PC-3 (cell line): ENCODE measurements at regions of chr12 and their contacts with region 1.

Region 1: DNA sequence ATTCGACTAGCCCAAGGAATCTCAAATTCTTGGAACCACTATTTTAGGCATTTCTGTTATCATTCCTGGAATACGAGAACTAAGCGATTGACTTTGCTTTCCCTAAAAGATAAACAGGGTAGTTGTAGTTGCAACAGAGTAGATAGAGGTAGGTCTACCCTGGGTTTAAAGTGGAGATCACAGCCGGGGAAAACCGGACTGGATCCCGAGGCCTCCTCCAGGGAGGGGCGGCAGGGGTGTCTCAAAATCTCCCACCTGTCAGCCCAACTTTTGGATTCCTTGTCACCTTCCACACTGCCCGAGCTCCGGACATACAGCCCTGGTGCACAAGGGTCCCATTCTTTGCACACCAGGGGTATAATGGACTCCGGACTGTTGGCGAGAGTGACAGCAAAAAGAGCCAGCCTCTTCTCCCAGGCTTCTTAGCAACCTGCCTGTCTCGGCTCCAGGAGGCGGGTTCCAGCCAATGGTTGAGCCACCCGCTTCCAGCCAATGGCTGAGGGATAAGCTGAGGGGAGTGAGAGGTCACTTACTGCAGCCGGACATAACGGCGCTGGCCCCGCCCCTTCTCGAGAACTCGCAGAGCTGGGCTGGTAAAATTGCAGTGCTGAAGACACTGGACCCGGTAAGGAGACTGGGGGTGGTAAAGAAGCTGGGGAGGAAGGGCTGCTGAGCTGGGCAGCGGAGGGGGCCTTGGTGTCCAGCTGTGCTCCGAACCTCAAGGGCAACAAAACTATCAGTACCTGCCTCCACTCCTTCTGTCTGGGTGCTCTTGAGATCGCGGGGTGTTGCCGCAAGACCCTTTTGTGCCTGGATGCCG is at the start of gene SUOX:
- DNase-seq: peak; percentile 98
- ATAC-seq: peak; percentile 99
- H3K4me3 ChIP-seq: peak within 1 kb of the TSS; percentile 82
- H3K27ac ChIP-seq: 0 out of 2 replicates have a peak within 1 kb of the TSS, but pooled peaks have one; percentile 5
- H3K4me1 ChIP-seq: peaks cover 5% of the 10 kb centered on the region; the same call in 1 of the 2 replicates
- H3K27me3 ChIP-seq: no peaks in the 10 kb centered on the region
- CTCF ChIP-seq: no peak
- total RNA-seq, gene SUOX: 18.0 and 33.9 TPM in 2 replicates

Region 2: GRCh38 chr12:54891717-54892554 is 1105.0 kb before region 1 on chr12:
- CTCF ChIA-PET with region 1: no interaction called
- POLR2A ChIA-PET with region 1: no interaction called
- intact Hi-C with region 1: no loop called
- DNase-seq: peak; percentile 96
- ATAC-seq: peak; percentile 99
- H3K4me3 ChIP-seq: no peak overlapping the region
- H3K27ac ChIP-seq: peak overlapping the region; percentile 57
- H3K4me1 ChIP-seq: peaks cover 21% of the 10 kb centered on the region
- H3K27me3 ChIP-seq: no peaks in the 10 kb centered on the region
- CTCF ChIP-seq: no peak

Region 3: DNA sequence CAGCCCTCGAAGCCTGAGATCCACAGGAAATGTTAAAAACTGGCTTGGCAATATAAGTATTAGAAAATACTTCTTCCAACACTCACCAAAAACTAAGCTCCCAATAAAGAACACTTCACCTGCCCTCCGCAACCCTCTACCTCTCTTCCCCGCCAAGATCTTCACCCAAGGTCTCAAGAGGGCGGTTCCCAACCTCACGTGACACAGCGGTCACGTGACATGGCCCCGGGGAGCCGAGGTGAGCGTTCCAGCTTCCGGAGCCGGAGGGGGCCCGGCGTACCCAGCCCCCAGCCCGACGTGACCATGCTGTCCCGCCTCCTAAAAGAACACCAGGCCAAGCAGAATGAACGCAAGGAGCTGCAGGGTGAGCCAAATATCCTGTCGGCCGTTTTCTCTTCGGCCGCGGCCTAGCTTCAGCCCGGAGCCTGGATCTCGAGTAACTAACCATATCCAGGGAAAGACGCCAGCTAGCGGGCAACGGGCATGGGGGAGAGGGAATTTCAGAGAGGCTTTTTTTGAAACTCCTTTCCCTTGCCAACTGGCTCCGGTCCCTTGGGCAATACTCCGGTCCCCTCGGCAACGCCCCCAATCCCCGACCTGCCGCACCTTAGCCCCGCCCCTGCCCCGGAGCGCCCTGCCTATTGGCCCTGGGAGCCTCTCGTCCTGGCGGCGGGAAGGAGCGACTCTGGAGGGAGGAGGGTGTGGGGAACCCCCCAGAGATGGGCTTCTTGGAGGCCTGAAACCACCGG is 280.9 kb before region 1 on chr12 and contains the start of gene BLOC1S1:
- CTCF ChIA-PET with region 1: no interaction called
- POLR2A ChIA-PET with region 1: no interaction called
- intact Hi-C with region 1: no loop called
- DNase-seq: peak; percentile 95
- ATAC-seq: peak; percentile 55
- H3K4me3 ChIP-seq: peak within 1 kb of the TSS; percentile 72
- H3K27ac ChIP-seq: peak within 1 kb of the TSS; percentile 86
- H3K4me1 ChIP-seq: peaks cover 62% of the 10 kb centered on the region
- H3K27me3 ChIP-seq: no peaks in the 10 kb centered on the region
- CTCF ChIP-seq: no peak
- total RNA-seq, gene BLOC1S1: 63.5 and 90.8 TPM in 2 replicates

Region 4: DNA sequence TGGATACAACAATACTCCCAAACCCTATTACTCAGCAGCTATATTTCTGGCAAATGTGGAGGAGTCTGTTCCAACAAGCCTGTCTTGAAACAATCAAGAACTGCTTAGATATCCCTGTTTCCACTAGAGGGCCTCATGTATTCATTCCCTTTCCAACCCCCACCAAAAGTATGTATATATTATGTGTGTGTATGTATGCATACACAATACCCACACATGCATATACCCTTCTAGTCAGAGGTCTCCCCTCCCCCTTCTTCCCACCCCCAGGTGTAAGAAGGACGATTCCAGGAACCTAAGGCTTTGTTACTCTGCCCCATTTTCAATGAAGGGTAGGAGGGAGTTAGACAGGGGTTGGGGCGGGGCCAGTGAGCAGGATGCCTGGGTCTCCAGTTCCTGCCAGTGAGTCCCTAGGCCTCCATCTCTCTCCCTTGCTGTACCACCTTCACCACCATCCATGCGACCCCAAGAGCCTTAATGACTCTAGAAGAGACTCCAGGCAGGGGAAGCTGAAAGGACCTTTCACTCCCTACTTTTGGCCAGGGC is 66.1 kb before region 1 on chr12 and contains the start of gene DGKA:
- CTCF ChIA-PET with region 1: no interaction called
- POLR2A ChIA-PET with region 1: no interaction called
- intact Hi-C with region 1: loop called (anchors 1 kb)
- DNase-seq: peak; percentile 75
- ATAC-seq: peak; percentile 23
- H3K4me3 ChIP-seq: peak within 1 kb of the TSS; percentile 82
- H3K27ac ChIP-seq: peak within 1 kb of the TSS; percentile 38
- H3K4me1 ChIP-seq: peaks cover 47% of the 10 kb centered on the region
- H3K27me3 ChIP-seq: no peaks in the 10 kb centered on the region
- CTCF ChIP-seq: peak; percentile 81
- total RNA-seq, gene DGKA: 27.2 and 41.5 TPM in 2 replicates

Region 5: GRCh38 chr12:55973598-55974307 is 23.2 kb before region 1 on chr12 and contains the start of gene RAB5B:
- CTCF ChIA-PET with region 1: interaction called, 9 read pairs
- POLR2A ChIA-PET with region 1: interaction called, 13 read pairs
- intact Hi-C with region 1: loop called (anchors 1 kb)
- DNase-seq: peak; percentile 100
- ATAC-seq: peak; percentile 93
- H3K4me3 ChIP-seq: peak within 1 kb of the TSS; percentile 93
- H3K27ac ChIP-seq: peak within 1 kb of the TSS; percentile 78
- H3K4me1 ChIP-seq: peaks cover 24% of the 10 kb centered on the region
- H3K27me3 ChIP-seq: no peaks in the 10 kb centered on the region
- CTCF ChIP-seq: no peak
- total RNA-seq, gene RAB5B: 48.8 and 50.6 TPM in 2 replicates

Region 6: GRCh38 chr12:56007564-56008559 is 10.9 kb after region 1 on chr12:
- CTCF ChIA-PET with region 1: interaction called, 8 read pairs
- POLR2A ChIA-PET with region 1: interaction called, 15 read pairs
- intact Hi-C with region 1: no loop called
- DNase-seq: peak; percentile 24
- ATAC-seq: peak; percentile 80
- H3K4me3 ChIP-seq: peak overlapping the region; percentile 87
- H3K27ac ChIP-seq: peak overlapping the region; percentile 41
- H3K4me1 ChIP-seq: peaks cover 4% of the 10 kb centered on the region; the same call in 1 of the 2 replicates
- H3K27me3 ChIP-seq: no peaks in the 10 kb centered on the region
- CTCF ChIP-seq: no peak

Region 7: GRCh38 chr12:56029666-56030293 is 32.9 kb after region 1 on chr12:
- CTCF ChIA-PET with region 1: interaction called, 29 read pairs
- POLR2A ChIA-PET with region 1: interaction called, 7 read pairs
- intact Hi-C with region 1: loop called (anchors 1 kb)
- DNase-seq: peak; percentile 59
- ATAC-seq: peak; percentile 81
- H3K4me3 ChIP-seq: no peak overlapping the region
- H3K27ac ChIP-seq: peak overlapping the region; percentile 27
- H3K4me1 ChIP-seq: peaks cover 17% of the 10 kb centered on the region
- H3K27me3 ChIP-seq: no peaks in the 10 kb centered on the region
- CTCF ChIP-seq: peak; percentile 85

Region 8: DNA sequence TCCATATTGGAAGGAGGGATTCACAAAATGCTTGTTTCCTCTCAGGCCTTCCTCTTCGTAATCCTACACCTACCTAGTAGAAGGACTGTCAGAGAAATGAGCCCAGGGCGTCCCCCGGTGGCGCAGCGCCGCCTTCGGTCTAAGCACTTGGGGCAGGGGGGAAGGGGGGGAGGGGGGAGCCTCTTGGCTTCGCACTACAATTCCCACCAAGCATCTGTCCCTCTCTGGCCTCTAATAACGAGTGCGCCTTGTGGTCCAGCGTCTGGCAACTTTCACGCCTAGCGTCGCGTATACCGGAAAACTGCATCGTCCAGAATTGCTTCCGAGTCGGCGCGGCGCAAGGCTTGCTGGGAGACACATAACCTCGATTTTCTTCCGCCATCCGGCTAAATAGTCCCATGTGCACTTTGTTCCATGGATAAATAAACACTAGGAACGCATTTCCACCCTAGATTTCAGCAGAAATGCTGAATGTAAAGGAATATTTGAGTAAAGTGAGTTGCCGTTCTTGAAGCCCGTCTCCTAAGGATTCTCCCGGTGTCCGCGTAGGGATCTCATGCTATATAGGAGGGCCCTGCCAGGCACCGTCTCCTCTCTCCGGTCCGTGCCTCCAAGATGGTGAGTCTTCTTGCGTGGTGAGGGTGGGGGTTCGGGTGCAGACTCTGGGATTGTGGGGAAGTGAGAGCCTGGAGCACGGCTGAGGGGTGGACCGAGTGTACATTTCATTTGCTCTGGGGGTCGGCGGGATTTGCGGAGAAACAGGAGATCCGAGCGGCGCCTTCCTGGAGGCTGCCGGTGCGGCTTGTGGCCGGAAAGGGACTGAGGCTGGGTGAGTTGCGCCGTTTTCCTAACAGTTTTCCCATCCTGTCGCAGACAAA is 44.9 kb after region 1 on chr12 and contains the start of gene RPS26:
- CTCF ChIA-PET with region 1: interaction called, 7 read pairs
- POLR2A ChIA-PET with region 1: no interaction called
- intact Hi-C with region 1: loop called (anchors 1 kb)
- DNase-seq: peak; percentile 99
- ATAC-seq: peak; percentile 95
- H3K4me3 ChIP-seq: peak within 1 kb of the TSS; percentile 80
- H3K27ac ChIP-seq: peak within 1 kb of the TSS; percentile 76
- H3K4me1 ChIP-seq: peaks cover 19% of the 10 kb centered on the region
- H3K27me3 ChIP-seq: no peaks in the 10 kb centered on the region
- CTCF ChIP-seq: peak; percentile 59
- total RNA-seq, gene RPS26: 183 and 320 TPM in 2 replicates

Region 9: DNA sequence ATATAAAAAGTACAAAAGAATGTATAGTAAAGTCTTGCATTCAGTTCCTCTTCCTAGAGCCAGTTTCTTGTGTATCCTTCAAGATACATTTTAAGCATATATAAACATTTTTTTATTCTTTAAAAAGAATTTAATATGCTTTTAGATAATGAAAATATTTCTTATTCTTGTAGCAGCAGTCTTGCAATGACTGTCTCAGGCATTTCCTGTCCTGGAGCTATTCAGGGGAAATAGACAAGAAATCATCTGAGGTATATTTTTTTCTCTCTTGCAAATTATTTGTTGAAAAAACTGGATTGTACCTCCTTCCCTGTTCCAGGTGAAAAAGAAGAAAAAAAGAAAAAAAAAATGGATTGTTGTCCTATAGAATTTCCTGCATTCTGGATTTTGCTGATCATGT is 66.1 kb after region 1 on chr12:
- CTCF ChIA-PET with region 1: no interaction called
- POLR2A ChIA-PET with region 1: no interaction called
- intact Hi-C with region 1: no loop called
- DNase-seq: no peak
- ATAC-seq: no peak
- H3K4me3 ChIP-seq: no peak overlapping the region
- H3K27ac ChIP-seq: no peak overlapping the region
- H3K4me1 ChIP-seq: no peaks in the 10 kb centered on the region
- H3K27me3 ChIP-seq: no peaks in the 10 kb centered on the region
- CTCF ChIP-seq: no peak

Region 10: GRCh38 chr12:56078990-56079664 is 82.2 kb after region 1 on chr12:
- CTCF ChIA-PET with region 1: interaction called, 17 read pairs
- POLR2A ChIA-PET with region 1: no interaction called
- intact Hi-C with region 1: no loop called
- DNase-seq: peak; percentile 89
- ATAC-seq: peak; percentile 81
- H3K4me3 ChIP-seq: peak overlapping the region; percentile 86
- H3K27ac ChIP-seq: peak overlapping the region; percentile 82
- H3K4me1 ChIP-seq: peaks cover 19% of the 10 kb centered on the region
- H3K27me3 ChIP-seq: no peaks in the 10 kb centered on the region
- CTCF ChIP-seq: peak; percentile 83